Caco-2 (cell line): ENCODE measurements at regions of chr10 and their contacts with region 1.

Region 1: DNA sequence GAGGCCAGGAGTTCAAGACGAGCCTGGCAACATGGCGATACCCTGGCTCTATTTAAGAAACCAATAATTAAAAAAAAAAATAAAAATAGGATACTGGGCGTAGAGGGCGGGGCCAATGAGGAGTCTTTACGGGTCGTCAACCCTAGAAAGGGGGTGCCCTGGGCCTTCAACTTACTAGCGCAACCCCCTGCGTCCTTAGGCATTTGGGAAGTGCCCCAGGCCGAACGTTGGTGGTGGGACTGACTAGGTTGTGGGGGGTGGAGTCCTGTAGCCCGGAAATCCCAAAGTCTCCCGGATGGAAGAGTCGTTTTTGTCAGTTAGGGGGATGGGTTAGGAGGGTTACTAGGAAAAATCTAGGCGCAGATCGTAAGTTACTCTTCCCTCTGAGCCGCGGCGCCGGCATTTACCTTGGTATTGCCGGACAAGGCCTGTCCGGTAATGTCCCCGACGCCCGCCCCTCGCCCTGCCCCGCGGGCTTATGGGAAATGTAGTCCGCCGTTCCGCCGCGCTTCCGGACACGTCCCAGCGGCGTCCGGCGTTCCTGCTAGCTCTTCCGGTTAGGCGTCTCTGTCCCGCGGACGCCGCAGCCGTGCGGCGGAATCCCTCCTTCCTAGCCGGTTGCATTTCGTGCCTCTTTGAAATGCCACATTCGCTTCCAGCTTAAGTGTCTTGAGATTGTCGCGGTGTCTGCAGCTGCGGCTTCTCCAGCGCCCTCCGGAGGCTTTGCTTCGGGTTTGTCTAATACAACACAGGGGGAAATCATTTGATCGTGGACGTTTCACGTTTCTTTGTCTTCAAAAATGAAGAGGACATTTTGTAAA is 1.3 kb upstream of the ACBD5 start:
- DNase-seq: peak; percentile 95 to 97
- H3K4me3 ChIP-seq: peak overlapping the region; percentile 86
- H3K4me3 Mint-ChIP-seq: peak overlapping the region; percentile 84
- H3K27ac Mint-ChIP-seq: peak overlapping the region; percentile 77
- H3K4me1 ChIP-seq: peaks cover 10% of the 10 kb centered on the region; the same call in 1 of the 2 replicates
- H3K4me1 Mint-ChIP-seq: peaks cover 5% of the 10 kb centered on the region
- H3K27me3 ChIP-seq: no peaks in the 10 kb centered on the region
- H3K27me3 Mint-ChIP-seq: no peaks in the 10 kb centered on the region
- CTCF ChIP-seq: peak; percentile 38 to 43

Region 2: DNA sequence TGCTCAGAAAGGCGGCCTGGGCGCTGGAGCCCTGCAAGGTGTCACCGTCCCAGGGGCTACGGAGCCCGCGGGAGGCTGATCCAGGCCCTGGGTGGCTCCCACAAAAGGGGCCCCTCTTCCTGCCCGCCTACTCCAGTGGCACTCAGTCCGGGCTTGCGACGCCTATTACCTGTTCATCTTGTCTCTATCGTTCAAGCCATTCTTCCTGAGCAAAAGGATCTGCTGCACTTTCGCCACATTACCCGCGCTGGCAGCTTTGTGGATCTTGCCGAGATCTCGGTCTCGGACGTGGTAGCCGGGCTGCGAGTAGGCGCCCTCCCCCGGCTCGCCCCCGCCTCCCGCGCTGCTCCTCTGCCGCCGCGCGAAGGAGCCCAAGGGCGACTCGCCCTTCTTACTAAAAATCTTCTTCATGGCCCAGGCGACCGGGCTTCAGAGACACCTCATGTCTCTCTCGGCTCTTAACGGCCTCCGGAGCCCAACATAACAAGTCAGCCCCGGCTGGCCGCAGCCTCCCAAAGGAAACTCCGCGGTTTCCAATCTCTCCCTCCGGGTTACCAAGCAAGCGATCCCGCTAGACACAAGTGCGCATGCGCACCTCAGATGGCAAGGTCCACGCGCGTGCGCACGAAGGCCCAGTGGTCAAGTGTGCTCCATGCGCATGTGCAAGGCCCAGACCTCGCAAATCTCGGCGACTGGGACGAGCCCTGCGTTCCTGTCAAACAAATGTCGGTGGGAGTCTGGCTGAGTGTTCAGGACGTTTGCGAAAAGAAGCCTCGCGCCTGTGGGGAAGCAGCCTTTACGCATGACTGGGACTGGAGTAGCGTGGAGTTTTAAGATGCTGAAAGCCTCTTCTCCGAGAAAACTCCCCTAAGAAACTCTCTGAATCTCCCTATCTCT is 141.7 kb before region 1 on chr10 and contains the start of gene ANKRD26:
- CTCF ChIA-PET with region 1: no interaction called
- POLR2A ChIA-PET with region 1: interaction called, 3 read pairs
- intact Hi-C with region 1: loop called (anchors 5 kb)
- DNase-seq: peak; percentile 98 to 99
- H3K4me3 ChIP-seq: peak within 1 kb of the TSS; percentile 71
- H3K4me3 Mint-ChIP-seq: peak within 1 kb of the TSS; percentile 84
- H3K27ac Mint-ChIP-seq: peak within 1 kb of the TSS; percentile 89
- H3K4me1 ChIP-seq: no peaks in the 10 kb centered on the region; the same call in 1 of the 2 replicates
- H3K4me1 Mint-ChIP-seq: peaks cover 7% of the 10 kb centered on the region
- H3K27me3 ChIP-seq: no peaks in the 10 kb centered on the region
- H3K27me3 Mint-ChIP-seq: peaks cover 2% of the 10 kb centered on the region
- CTCF ChIP-seq: no peak
- total RNA-seq, gene ANKRD26: 16.2 and 17.5 TPM in 2 replicates

Region 3: GRCh38 chr10:27223964-27224363 is 17.9 kb before region 1 on chr10:
- CTCF ChIA-PET with region 1: interaction called, 9 read pairs
- POLR2A ChIA-PET with region 1: no interaction called
- intact Hi-C with region 1: loop called (anchors 1 kb)
- DNase-seq: peak; percentile 51 to 66
- H3K4me3 ChIP-seq: no peak overlapping the region
- H3K4me3 Mint-ChIP-seq: no peak overlapping the region
- H3K27ac Mint-ChIP-seq: no peak overlapping the region
- H3K4me1 ChIP-seq: no peaks in the 10 kb centered on the region
- H3K4me1 Mint-ChIP-seq: no peaks in the 10 kb centered on the region
- H3K27me3 ChIP-seq: no peaks in the 10 kb centered on the region
- H3K27me3 Mint-ChIP-seq: no peaks in the 10 kb centered on the region
- CTCF ChIP-seq: peak; percentile 59 to 61

Region 4: GRCh38 chr10:27252267-27253000 is 10.6 kb after region 1 on chr10:
- CTCF ChIA-PET with region 1: interaction called, 6 read pairs
- POLR2A ChIA-PET with region 1: interaction called, 10 read pairs
- intact Hi-C with region 1: loop called (anchors 1 kb)
- DNase-seq: peak; percentile 84 to 95
- H3K4me3 ChIP-seq: peak overlapping the region; percentile 78
- H3K4me3 Mint-ChIP-seq: peak overlapping the region; percentile 80
- H3K27ac Mint-ChIP-seq: peak overlapping the region; percentile 84
- H3K4me1 ChIP-seq: no peaks in the 10 kb centered on the region
- H3K4me1 Mint-ChIP-seq: peaks cover 7% of the 10 kb centered on the region
- H3K27me3 ChIP-seq: no peaks in the 10 kb centered on the region
- H3K27me3 Mint-ChIP-seq: no peaks in the 10 kb centered on the region
- CTCF ChIP-seq: peak; percentile 60 to 87

Region 5: GRCh38 chr10:27360581-27361172 is 118.8 kb after region 1 on chr10:
- CTCF ChIA-PET with region 1: no interaction called
- POLR2A ChIA-PET with region 1: no interaction called
- intact Hi-C with region 1: loop called (anchors 5 kb)
- DNase-seq: peak; percentile 81 to 89
- H3K4me3 ChIP-seq: no peak overlapping the region
- H3K4me3 Mint-ChIP-seq: no peak overlapping the region
- H3K27ac Mint-ChIP-seq: no peak overlapping the region
- H3K4me1 ChIP-seq: no peaks in the 10 kb centered on the region
- H3K4me1 Mint-ChIP-seq: no peaks in the 10 kb centered on the region
- H3K27me3 ChIP-seq: no peaks in the 10 kb centered on the region
- H3K27me3 Mint-ChIP-seq: peaks cover 3% of the 10 kb centered on the region
- CTCF ChIP-seq: peak; percentile 98 to 99